ENCODE measurements at regions of chr3 and their contacts with region 1.

Region 1: GRCh38 chr3:127556565-127556964 is 34.0 kb downstream of the TPRA1 start:
- DNase-seq: no peak
- H3K4me3 ChIP-seq: no peak overlapping the region
- H3K27ac ChIP-seq: no peak overlapping the region
- H3K4me1 ChIP-seq: no peaks in the 10 kb centered on the region
- H3K27me3 ChIP-seq: no peaks in the 10 kb centered on the region
- CTCF ChIP-seq: no peak

Region 2: DNA sequence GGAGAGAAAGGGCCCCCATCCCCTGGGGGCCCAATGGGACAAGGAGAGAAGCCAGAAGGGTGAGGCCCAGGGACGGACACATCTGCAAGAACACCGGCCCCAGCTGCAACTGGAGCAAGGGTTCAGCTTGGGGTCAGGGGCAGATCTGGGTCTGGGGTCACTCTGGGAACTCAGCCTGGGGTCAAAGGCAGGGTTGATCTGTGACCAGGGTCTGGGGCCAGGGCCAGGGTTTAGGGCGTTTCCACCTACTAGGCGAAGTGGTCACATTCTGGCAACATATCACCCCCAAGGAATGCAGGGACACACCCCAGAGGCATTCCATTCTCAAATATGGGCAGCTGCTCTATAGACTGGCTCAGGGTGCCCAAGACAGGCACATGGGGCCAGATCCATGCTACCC is 1048.0 kb before region 1 on chr3:
- CTCF ChIA-PET with region 1: no interaction called
- POLR2A ChIA-PET with region 1: interaction called, 10 read pairs
- intact Hi-C with region 1: no loop called
- DNase-seq: peak; percentile 65 to 78
- H3K4me3 ChIP-seq: no peak overlapping the region
- H3K27ac ChIP-seq: no peak overlapping the region
- H3K4me1 ChIP-seq: peaks cover 10% of the 10 kb centered on the region
- H3K27me3 ChIP-seq: peaks cover 14% of the 10 kb centered on the region; the same call in 1 of the 2 replicates
- CTCF ChIP-seq: no peak

Region 3: DNA sequence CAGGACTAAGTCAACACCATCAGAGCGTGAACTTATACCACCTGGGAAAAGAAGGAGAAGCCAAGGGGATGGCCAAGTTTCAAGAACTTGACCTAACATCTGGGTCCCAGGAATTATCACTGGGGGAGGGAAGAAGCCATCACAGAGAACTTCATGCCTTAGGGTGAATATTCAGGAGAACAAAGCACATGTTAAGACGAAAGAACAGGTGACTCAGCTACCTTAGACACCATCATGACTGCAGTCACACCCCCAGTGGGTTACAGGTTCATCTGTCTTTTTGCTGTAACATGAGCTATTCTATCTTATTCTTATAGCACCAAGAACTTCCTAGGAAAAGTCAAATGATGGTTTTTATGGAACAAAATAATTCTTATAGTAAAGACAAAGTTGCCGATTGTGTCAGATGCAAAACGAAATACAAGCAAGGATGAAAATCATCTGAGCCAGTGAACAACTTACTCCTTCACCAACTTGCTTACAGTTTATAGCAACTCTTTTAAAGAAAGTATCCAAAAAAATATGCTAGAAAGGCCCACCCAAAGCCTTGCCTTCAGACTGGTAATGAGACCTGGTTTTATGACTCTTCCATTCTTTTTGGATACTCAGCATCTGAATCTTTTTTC is 38.0 kb before region 1 on chr3:
- CTCF ChIA-PET with region 1: no interaction called
- POLR2A ChIA-PET with region 1: no interaction called
- intact Hi-C with region 1: no loop called
- DNase-seq: no peak
- H3K4me3 ChIP-seq: no peak overlapping the region
- H3K27ac ChIP-seq: no peak overlapping the region
- H3K4me1 ChIP-seq: no peaks in the 10 kb centered on the region
- H3K27me3 ChIP-seq: peaks cover 29% of the 10 kb centered on the region
- CTCF ChIP-seq: no peak

Region 4: GRCh38 chr3:127639173-127640030 is 82.8 kb after region 1 on chr3:
- CTCF ChIA-PET with region 1: no interaction called
- POLR2A ChIA-PET with region 1: no interaction called
- intact Hi-C with region 1: no loop called
- DNase-seq: peak; percentile 53 to 75
- H3K4me3 ChIP-seq: no peak overlapping the region
- H3K27ac ChIP-seq: peak overlapping the region; percentile 24; the same call in 1 of the 2 replicates
- H3K4me1 ChIP-seq: peaks cover 23% of the 10 kb centered on the region
- H3K27me3 ChIP-seq: no peaks in the 10 kb centered on the region
- CTCF ChIP-seq: no peak

Region 5: DNA sequence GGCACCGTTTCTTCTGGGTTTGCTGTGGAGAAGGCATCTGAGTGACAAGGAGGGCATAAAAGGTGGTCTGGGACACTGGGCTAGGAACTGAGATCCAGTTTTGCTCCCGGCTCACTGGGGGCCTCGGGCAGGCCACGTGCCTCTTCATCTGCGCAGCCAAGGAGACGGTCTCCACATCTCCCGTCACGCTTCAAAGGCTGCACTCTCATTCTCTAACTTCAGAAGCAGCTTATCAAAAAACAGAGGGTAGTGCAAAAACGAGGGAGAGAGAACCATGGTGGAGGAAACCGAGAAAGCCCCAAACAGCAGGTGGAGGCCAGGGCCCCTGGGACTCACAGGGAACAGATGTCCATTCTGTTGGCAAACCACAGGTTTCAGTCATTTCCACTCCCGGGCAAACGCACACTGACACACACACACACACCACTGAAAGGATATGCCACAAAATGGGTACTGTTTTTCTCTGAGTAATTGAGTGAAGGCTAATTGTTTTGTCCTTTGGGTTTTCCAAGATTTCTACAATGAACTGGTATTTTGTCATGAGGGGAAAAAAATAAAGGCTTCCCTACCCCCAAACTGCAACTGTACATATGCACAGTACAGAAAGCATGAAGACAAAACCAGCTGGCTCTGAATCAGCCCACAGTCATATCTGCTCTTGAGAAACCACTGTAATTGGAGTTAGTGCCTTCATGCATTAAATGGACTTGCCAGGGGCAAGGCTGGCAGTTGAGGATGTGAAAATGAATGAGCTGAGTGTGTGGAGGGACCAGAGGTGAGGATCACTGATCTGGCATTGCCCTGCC is 193.9 kb after region 1 on chr3:
- CTCF ChIA-PET with region 1: no interaction called
- POLR2A ChIA-PET with region 1: no interaction called
- intact Hi-C with region 1: no loop called
- DNase-seq: peak in 1 of 2 experiments; percentile 84
- H3K4me3 ChIP-seq: no peak overlapping the region
- H3K27ac ChIP-seq: peak overlapping the region; percentile 91
- H3K4me1 ChIP-seq: peaks cover 64% of the 10 kb centered on the region
- H3K27me3 ChIP-seq: no peaks in the 10 kb centered on the region
- CTCF ChIP-seq: no peak

Region 6: DNA sequence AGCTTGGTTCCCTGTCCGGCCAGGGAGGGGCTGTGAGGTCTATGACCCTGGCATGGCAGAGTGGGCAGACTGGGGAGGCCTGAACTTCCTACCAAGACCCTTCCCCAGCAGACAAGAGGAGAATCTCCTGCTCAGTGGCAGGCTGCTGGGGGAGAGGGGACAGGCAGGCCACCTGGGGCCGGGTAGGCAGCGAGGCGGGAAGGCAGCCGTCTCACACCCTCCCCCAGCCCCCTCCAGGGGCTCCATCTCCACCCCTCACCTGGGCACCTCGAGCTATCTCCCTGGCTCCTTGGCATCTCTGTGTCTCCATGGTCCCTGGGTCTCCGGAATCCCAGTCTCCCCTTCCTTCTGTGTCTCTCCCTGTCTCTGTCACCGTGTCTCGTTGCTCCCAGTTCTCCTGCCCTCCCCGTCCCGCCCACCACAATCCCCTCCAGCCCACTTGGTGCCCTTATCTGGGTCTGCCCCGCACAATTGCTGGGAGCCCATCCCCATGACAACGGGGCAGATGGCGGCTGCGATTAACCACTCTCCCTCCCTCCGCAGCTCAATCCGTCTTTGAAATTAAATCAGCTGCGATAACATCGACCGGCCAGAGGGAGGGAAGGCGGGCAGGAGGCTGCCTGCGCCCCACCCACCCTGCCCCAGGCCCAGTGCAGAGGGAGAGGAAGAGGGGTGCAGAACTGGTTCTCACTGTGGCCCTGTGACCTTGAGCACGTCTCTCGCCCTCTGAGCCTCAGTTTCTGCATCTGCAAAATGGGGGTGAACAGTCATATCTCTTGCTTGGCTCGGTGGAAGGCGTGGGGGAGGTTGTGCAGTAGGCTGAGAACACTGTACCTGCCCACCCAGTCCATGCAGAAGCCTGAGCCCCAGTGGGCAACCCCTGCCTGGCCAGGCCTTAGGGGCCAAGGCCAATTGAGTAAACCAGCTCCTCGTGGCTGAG is 900.5 kb after region 1 on chr3:
- CTCF ChIA-PET with region 1: no interaction called
- POLR2A ChIA-PET with region 1: no interaction called
- intact Hi-C with region 1: no loop called
- DNase-seq: no peak
- H3K4me3 ChIP-seq: no peak overlapping the region
- H3K27ac ChIP-seq: no peak overlapping the region
- H3K4me1 ChIP-seq: peaks cover 12% of the 10 kb centered on the region
- H3K27me3 ChIP-seq: no peaks in the 10 kb centered on the region
- CTCF ChIP-seq: no peak

Measured in PC-9 (cell line).